ENCODE measurements at regions of chr21 and their contacts with region 1.

Region 1: DNA sequence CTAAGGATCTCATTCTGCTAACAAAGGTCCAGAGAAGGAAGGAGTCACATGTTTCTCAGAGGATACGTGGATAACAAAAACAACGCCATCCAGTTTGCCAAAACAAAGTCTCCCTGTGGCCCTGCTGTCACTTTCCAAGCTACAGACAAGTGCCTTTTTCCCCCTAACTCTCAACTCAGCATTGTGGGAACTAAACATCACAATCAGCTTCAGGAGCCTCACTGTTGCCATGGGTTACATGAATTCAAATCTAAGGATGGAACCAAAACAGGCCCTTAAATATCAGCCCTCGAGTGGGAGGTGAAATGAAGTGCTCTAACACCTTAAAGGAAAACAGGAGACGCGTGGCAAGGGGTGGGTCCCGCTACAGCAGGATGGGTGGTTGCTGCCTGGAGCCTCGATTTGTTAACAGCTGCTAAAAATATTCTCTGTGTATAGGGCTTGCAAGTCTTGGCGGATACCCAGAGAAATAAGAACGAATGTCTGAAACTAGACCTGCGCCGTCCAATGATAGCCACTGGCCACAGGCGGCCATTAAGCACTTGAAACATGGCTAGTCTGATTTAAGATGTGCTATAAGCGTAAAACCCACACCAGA is 66.4 kb upstream of the SOD1 start:
- H3K4me3 ChIP-seq: no peak overlapping the region
- H3K27ac ChIP-seq: no peak overlapping the region
- H3K4me1 ChIP-seq: no peaks in the 10 kb centered on the region
- CTCF ChIP-seq: no peak

Region 2: GRCh38 chr21:31509194-31510017 is 83.7 kb before region 1 on chr21:
- CTCF ChIA-PET with region 1: interaction called, 15 read pairs
- POLR2A ChIA-PET with region 1: no interaction called
- H3K4me3 ChIP-seq: no peak overlapping the region
- H3K27ac ChIP-seq: no peak overlapping the region
- H3K4me1 ChIP-seq: peaks cover 19% of the 10 kb centered on the region
- CTCF ChIP-seq: no peak

Region 3: DNA sequence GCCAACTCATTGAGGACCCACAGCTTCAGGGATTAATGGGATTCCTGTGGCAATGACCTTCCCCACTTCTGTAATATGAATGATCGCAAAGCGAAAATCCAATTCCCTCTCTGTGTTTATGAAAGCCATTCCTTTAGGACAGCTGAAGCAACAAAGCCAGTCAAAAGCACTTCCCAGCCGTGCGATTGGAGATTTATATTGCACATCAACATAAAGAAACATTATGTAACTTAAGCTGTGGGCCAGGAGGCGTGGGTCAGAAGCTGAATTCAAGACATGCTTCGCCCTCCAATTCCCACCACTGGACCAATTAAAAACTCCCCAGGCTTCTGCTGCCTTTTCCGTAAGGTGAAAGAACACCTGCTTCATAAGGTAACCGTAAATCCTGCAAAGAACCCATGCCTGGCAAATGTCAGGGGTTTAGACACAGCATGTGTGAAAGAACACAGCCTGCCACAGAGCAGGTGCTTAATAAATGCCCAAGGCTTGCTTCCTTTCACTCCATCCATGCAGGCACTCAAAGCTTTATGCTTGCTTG is 72.4 kb before region 1 on chr21:
- CTCF ChIA-PET with region 1: no interaction called
- POLR2A ChIA-PET with region 1: no interaction called
- H3K4me3 ChIP-seq: no peak overlapping the region
- H3K27ac ChIP-seq: peak overlapping the region; percentile 29; the same call in 1 of the 2 replicates
- H3K4me1 ChIP-seq: peaks cover 21% of the 10 kb centered on the region
- CTCF ChIP-seq: no peak

Region 4: DNA sequence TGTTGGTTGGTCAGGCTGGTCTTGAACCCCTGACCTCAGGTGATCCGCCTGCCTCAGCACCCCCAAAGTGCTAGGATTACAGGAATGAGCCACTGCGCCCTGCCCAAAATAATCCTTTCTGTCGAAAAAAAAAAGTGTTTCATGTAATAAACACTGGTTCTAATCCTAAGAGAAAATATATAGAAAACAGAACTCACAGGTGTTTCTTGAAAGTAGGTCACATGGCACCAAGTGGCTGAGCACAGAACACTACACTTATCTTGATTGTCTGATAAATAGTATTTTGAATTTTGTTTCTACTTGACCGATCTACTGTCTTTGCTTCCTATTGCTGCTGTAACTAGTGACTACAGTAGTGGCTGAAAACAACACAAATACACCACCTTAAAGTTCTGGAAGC is 21.2 kb before region 1 on chr21:
- CTCF ChIA-PET with region 1: no interaction called
- POLR2A ChIA-PET with region 1: no interaction called
- H3K4me3 ChIP-seq: no peak overlapping the region
- H3K27ac ChIP-seq: no peak overlapping the region
- H3K4me1 ChIP-seq: no peaks in the 10 kb centered on the region
- CTCF ChIP-seq: no peak

Measured in HEK293 (cell line).